ENCODE measurements at regions of chrX and their contacts with region 1.

Region 1: DNA sequence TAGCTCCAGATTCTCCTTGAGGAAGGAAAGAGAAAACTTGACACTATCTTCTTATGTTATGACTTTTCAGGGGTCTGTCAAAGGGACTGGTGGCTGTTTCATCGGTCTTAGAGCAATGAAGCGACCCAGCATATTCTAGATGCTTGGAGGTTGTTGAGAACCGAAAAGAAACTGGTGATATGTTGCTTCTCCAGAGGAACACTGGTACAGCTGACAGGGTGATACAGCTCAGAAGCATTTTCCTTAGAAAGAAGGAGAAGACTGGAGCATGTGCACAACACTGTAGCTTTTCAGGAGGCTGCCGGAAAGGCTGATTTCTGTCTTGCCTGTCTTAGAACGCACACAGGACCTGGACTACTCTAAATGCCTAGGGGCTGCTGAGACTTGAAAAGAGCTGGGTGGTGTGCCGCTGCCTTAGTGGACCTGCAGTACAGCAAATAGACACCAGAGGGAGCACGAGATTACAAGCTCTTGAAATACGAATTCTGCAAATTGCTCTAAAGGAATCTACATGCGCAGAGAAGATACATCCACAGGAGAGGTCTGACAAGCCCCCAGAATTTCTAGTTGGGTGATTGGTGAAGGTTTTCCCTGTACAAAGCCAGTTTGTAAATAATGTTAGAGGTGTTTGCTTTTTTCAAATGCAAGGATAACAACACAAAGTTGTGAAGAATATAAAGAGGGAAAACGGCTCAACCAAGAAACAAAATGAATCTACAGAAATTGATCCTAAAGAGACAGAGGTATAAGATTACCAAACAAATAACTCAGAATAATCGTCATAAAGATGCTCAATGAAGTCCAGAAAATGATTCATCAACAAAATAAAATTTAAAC is 223.1 kb upstream of the DMD start:
- DNase-seq: peak; percentile 42
- H3K4me3 ChIP-seq: no peak overlapping the region; a peak in 1 of 4 replicates
- H3K27ac ChIP-seq: no peak overlapping the region
- H3K4me1 ChIP-seq: no peaks in the 10 kb centered on the region; a peak in 1 of 4 replicates
- H3K27me3 ChIP-seq: no peaks in the 10 kb centered on the region
- CTCF ChIP-seq: peak; percentile 80
- EP300 ChIP-seq: no peak
- RAD21 ChIP-seq: peak; percentile 74

Region 2: DNA sequence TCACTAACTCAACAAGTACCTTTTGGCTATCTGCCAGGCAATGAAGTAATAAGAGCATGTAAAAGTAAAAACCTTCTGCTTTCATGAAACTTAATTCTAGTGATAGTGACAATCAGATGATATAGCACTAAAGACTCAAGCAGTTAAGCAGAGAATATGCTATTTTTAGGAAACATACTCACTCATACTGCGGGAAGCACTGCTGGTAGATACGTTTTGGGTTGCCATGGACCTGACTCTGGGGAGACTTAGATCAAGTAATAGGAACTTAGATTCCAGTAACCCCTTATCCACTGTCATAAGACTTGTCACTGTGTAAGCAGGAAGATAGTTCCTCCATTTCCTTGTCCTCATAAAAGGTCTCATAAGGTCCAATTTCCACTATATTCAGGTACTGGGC is 609.5 kb before region 1 on chrX:
- CTCF ChIA-PET with region 1: no interaction called
- POLR2A ChIA-PET with region 1: no interaction called
- DNase-seq: no peak
- H3K4me3 ChIP-seq: no peak overlapping the region
- H3K27ac ChIP-seq: no peak overlapping the region
- H3K4me1 ChIP-seq: no peaks in the 10 kb centered on the region
- H3K27me3 ChIP-seq: no peaks in the 10 kb centered on the region
- CTCF ChIP-seq: no peak
- EP300 ChIP-seq: no peak
- RAD21 ChIP-seq: no peak

Region 3: GRCh38 chrX:33277046-33277445 is 157.4 kb before region 1 on chrX:
- CTCF ChIA-PET with region 1: no interaction called
- POLR2A ChIA-PET with region 1: no interaction called
- DNase-seq: no peak
- H3K4me3 ChIP-seq: no peak overlapping the region
- H3K27ac ChIP-seq: no peak overlapping the region
- H3K4me1 ChIP-seq: no peaks in the 10 kb centered on the region
- H3K27me3 ChIP-seq: no peaks in the 10 kb centered on the region
- CTCF ChIP-seq: no peak
- EP300 ChIP-seq: no peak
- RAD21 ChIP-seq: no peak

Region 4: GRCh38 chrX:34275699-34276098 is 841.2 kb after region 1 on chrX:
- CTCF ChIA-PET with region 1: interaction called, 13 read pairs
- POLR2A ChIA-PET with region 1: no interaction called
- DNase-seq: no peak
- H3K4me3 ChIP-seq: no peak overlapping the region
- H3K27ac ChIP-seq: no peak overlapping the region
- H3K4me1 ChIP-seq: no peaks in the 10 kb centered on the region
- H3K27me3 ChIP-seq: no peaks in the 10 kb centered on the region
- CTCF ChIP-seq: no peak
- EP300 ChIP-seq: no peak
- RAD21 ChIP-seq: peak; percentile 50; the same call in 1 of the 2 replicates

Region 5: GRCh38 chrX:34300871-34301270 is 866.4 kb after region 1 on chrX:
- CTCF ChIA-PET with region 1: interaction called, 13 read pairs
- POLR2A ChIA-PET with region 1: no interaction called
- DNase-seq: peak; percentile 13
- H3K4me3 ChIP-seq: no peak overlapping the region
- H3K27ac ChIP-seq: no peak overlapping the region
- H3K4me1 ChIP-seq: no peaks in the 10 kb centered on the region
- H3K27me3 ChIP-seq: no peaks in the 10 kb centered on the region
- CTCF ChIP-seq: peak; percentile 71
- EP300 ChIP-seq: no peak
- RAD21 ChIP-seq: peak; percentile 83